CD8-positive, alpha-beta T cell (primary cell): ENCODE measurements at regions of chr9 and their contacts with region 1.

Region 1: GRCh38 chr9:93566408-93567270 is 9.7 kb upstream of the PHF2 start:
- DNase-seq: peak; percentile 97 to 100 (median 99)
- ATAC-seq: peak; percentile 97
- H3K4me3 ChIP-seq: peak overlapping the region; percentile 65 to 72
- H3K4me3 Mint-ChIP-seq: peak overlapping the region; percentile 84
- H3K27ac ChIP-seq: peak overlapping the region; percentile 79 to 94
- H3K27ac Mint-ChIP-seq: peak overlapping the region; percentile 98
- H3K4me1 ChIP-seq: peaks cover 15% of the 10 kb centered on the region
- H3K4me1 Mint-ChIP-seq: peaks cover 18% of the 10 kb centered on the region
- H3K27me3 ChIP-seq: no peaks in the 10 kb centered on the region
- H3K27me3 Mint-ChIP-seq: no peaks in the 10 kb centered on the region
- CTCF ChIP-seq: peak; percentile 95

Region 2: DNA sequence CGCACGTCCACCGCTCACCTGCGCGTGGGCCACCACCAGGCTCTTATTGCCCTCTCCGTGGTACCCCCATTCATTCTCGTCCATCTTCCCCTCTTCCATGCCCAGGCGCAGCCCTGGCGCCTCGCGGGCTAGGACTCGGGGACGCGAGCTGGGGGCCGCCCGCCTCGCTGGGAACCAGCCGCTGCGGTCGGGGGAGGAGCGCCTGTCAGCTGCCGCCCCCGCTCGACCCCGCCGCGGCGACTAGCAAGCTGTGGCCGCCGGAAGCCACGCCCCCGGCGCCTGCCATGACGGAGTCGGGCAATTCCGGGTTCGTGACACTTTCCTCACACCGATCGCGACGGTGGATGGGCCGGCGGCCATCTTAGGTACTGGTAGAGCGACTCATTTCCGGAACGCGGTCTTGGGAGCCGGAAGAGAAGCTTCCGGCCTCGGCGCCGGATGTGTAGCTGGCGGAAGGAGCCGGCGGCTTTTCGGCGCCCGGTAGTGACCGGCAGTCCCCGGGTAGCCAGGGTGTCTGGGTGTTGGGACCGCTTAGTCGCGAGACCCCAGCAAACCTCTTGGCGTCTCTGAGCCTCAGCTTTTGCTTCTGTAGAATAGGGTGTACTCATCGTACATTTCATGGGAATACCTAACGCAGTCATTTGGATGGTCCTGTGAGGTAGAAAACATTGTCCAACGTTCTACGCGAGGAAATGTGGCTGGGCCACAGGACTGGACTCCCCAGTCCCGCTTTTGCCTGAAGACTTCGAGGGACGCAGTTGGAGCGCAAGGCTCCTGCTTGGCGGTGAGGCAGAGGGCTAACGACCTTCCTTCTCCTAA is 896.5 kb before region 1 on chr9 and contains the start of gene IPPK:
- CTCF ChIA-PET with region 1: no interaction called
- POLR2A ChIA-PET with region 1: no interaction called
- intact Hi-C with region 1: loop called (anchors 1 to 5 kb)
- DNase-seq: peak; percentile 93 to 99 (median 96)
- ATAC-seq: peak; percentile 93
- H3K4me3 ChIP-seq: peak within 1 kb of the TSS; percentile 87 to 98
- H3K4me3 Mint-ChIP-seq: peak within 1 kb of the TSS; percentile 96
- H3K27ac ChIP-seq: peak within 1 kb of the TSS; percentile 96
- H3K27ac Mint-ChIP-seq: peak within 1 kb of the TSS; percentile 98
- H3K4me1 ChIP-seq: peaks cover 23% of the 10 kb centered on the region
- H3K4me1 Mint-ChIP-seq: peaks cover 39% of the 10 kb centered on the region
- H3K27me3 ChIP-seq: no peaks in the 10 kb centered on the region
- H3K27me3 Mint-ChIP-seq: no peaks in the 10 kb centered on the region
- CTCF ChIP-seq: no peak
- total RNA-seq, gene IPPK: 12.2 to 12.8 TPM

Region 3: DNA sequence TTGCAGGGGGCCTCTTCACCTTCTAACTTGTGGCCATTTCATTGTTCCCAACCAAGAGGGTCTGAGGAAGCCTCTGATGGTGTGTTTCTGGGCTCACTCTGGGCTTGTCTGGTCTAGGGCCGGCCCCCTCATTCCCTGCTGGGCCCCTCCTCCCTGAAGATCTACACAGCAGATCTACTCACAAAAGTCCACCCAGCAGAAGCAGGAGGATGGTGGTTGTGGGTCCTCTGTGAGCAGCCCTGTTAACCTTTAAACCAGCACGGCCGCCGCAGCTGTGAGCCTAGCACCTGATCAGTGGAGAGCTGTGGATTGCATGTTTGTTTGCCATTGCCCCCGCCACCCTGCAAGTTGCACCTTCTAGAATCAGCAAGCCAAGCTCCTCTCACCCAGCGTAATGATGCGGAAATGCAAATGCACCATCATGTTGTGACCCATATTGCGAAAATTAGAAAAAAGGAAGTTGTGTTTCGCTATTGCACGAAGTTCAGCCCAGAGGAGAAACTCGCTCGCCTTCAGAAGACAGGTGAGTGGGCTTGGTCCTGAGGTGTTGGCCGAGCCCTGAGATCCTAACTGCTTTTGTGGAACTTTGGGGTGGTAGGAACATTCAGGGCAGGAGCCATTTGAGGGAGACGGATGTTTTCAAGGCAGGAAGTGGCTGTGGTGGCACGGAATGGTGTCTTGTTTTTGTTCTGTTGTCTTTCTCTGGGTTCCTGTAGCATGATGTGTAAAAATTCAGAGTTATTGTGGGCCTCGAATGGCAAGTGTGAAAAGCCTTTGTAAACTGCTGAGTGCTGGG is 602.6 kb before region 1 on chr9:
- CTCF ChIA-PET with region 1: no interaction called
- POLR2A ChIA-PET with region 1: interaction called, 5 read pairs
- intact Hi-C with region 1: loop called in 1 of 2 experiments (anchors 5 kb)
- DNase-seq: peak; percentile 64 to 94 (median 82)
- ATAC-seq: peak; percentile 74
- H3K4me3 ChIP-seq: peak overlapping the region; percentile 59 to 81
- H3K4me3 Mint-ChIP-seq: peak overlapping the region; percentile 91
- H3K27ac ChIP-seq: peak overlapping the region; percentile 91 to 94
- H3K27ac Mint-ChIP-seq: peak overlapping the region; percentile 100
- H3K4me1 ChIP-seq: peaks cover 62% of the 10 kb centered on the region
- H3K4me1 Mint-ChIP-seq: peaks cover 60% of the 10 kb centered on the region
- H3K27me3 ChIP-seq: no peaks in the 10 kb centered on the region
- H3K27me3 Mint-ChIP-seq: no peaks in the 10 kb centered on the region
- CTCF ChIP-seq: no peak

Region 4: DNA sequence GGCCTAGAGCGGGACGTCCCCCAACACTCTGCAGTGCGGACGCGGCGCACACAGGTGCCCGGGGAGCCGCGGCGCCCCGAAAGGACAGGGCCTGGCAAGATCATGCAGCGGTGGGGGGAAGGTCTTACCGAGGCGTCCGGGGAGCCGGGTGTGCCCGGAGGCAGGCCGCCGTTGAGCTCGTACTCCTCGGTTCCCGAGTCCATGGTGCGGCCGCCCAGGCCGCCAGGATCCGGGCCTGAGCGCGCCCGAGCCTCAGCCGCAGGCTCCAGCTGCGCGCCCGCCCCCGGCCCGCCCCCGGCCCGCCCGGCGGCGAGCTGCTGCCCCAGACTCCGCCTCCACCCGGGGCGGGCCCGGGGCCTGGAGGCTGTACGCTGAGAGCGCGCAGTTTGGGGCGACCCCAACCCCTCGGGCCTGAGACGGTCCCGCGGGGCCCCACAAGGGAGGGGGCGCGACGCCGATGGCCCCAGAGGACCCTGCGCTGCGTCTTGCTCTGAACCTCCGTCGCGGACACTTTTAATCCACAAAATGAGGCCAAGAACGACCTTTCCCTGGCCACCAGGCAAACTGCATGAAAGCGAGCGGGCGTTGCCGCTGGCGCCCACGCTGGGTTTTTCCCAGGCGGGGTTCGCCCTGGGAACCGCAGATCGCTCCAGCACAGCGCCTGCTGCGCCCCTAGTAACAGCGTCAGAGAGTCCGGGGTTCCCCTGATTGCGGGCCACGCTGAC is 432.5 kb before region 1 on chr9 and contains the start of gene NINJ1:
- CTCF ChIA-PET with region 1: no interaction called
- POLR2A ChIA-PET with region 1: interaction called, 6 read pairs
- intact Hi-C with region 1: loop called in 1 of 2 experiments (anchors 10 kb)
- DNase-seq: peak; percentile 59 to 97 (median 79)
- ATAC-seq: peak; percentile 83
- H3K4me3 ChIP-seq: peak within 1 kb of the TSS; percentile 84 to 89
- H3K4me3 Mint-ChIP-seq: peak within 1 kb of the TSS; percentile 92
- H3K27ac ChIP-seq: peak within 1 kb of the TSS; percentile 85 to 92
- H3K27ac Mint-ChIP-seq: peak within 1 kb of the TSS; percentile 96
- H3K4me1 ChIP-seq: peaks cover 50% of the 10 kb centered on the region
- H3K4me1 Mint-ChIP-seq: peaks cover 56% of the 10 kb centered on the region
- H3K27me3 ChIP-seq: no peaks in the 10 kb centered on the region
- H3K27me3 Mint-ChIP-seq: no peaks in the 10 kb centered on the region
- CTCF ChIP-seq: no peak
- total RNA-seq, gene NINJ1: 214 to 229 TPM

Region 5: DNA sequence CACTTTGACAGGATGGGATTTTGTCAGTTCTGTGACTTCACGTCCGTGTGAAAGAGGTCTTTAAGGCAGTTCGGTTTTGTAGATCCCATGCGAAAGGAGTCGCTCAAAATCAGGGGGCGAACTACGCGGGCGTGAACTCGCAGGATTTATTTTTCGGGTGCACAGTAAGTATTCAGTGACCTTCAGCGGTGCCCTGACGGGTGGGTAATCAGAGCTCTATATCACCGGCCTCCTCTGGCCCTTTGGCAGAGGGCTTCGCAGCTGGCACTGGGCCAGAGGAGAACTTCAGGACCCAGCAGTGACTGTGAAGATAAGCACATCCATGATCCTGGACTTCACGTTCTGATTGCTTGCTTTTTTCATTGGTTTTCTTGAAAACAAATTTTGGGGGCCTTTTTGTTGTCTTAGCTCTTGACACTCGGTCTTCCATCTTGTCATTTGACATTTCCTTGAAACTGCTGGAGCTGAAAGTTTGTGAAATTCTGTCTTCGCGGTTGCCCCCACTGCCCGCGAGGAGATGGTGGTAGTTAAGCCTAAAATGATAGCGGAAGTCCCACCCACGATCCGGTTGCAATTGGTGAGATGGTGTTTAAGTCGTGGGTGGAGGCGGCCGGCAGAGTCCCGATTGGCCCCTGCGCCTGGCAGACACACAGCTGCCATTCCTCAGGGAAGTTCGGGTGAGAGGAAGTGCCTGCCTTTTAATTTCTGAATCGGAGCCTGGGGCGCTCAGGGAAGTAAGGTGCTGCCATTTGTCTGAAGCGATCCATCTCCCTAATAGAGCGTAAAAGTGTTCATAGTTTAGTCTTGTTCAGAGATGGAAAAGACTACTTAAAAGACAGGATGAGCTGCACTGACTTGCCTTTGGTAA is 113.4 kb before region 1 on chr9 and contains the start of gene FAM120AOS:
- CTCF ChIA-PET with region 1: interaction called, 18 read pairs
- POLR2A ChIA-PET with region 1: interaction called, 7 read pairs
- intact Hi-C with region 1: loop called (anchors 1 kb)
- DNase-seq: peak; percentile 59 to 95 (median 85)
- ATAC-seq: peak; percentile 74
- H3K4me3 ChIP-seq: peak within 1 kb of the TSS; percentile 63 to 88
- H3K4me3 Mint-ChIP-seq: peak within 1 kb of the TSS; percentile 90
- H3K27ac ChIP-seq: peak within 1 kb of the TSS; percentile 49 to 68
- H3K27ac Mint-ChIP-seq: peak within 1 kb of the TSS; percentile 95
- H3K4me1 ChIP-seq: peaks cover 27% of the 10 kb centered on the region
- H3K4me1 Mint-ChIP-seq: peaks cover 60% of the 10 kb centered on the region
- H3K27me3 ChIP-seq: no peaks in the 10 kb centered on the region
- H3K27me3 Mint-ChIP-seq: no peaks in the 10 kb centered on the region
- CTCF ChIP-seq: no peak
- total RNA-seq, gene FAM120AOS: 40.3 to 40.7 TPM